Mucosa of descending colon (tissue), 3 donors: ENCODE measurements at regions of chr2 and their contacts with region 1.

Region 1: DNA sequence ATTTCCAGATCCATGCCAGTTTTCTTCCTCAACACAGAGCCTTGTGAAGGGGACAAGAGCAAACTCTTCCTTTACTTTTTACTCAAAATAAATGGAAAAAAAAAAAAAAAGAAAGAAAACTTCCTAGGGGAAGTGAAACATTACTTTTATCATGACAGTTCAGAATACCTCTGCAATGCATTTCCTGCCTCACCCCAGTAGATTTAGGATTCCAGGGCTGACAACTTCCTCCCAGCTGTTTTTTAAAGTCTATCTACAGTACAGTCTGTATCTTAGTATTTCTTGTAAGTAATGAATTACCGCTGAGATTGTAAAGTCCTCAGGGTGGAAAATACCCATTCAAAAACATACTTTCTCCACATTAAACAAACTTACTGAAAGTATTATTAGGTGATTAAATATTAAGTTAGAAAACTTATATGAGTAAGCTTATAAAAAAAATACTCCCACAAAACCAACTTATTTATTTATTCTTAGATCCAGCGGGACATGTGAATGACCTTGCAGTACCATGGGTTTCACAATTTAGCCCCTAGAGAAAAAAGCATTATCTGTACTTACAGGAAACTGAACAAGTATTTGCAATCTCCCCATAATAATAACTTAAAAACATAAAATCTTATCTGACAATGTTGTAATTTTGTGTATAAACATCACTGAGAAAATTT is 117.7 kb downstream of the RBMS1 start:
- DNase-seq: no peak
- ATAC-seq: peak; percentile 52
- H3K4me3 ChIP-seq: no peak overlapping the region
- H3K4me1 ChIP-seq: peaks cover 6% of the 10 kb centered on the region
- CTCF ChIP-seq: no peak

Region 2: DNA sequence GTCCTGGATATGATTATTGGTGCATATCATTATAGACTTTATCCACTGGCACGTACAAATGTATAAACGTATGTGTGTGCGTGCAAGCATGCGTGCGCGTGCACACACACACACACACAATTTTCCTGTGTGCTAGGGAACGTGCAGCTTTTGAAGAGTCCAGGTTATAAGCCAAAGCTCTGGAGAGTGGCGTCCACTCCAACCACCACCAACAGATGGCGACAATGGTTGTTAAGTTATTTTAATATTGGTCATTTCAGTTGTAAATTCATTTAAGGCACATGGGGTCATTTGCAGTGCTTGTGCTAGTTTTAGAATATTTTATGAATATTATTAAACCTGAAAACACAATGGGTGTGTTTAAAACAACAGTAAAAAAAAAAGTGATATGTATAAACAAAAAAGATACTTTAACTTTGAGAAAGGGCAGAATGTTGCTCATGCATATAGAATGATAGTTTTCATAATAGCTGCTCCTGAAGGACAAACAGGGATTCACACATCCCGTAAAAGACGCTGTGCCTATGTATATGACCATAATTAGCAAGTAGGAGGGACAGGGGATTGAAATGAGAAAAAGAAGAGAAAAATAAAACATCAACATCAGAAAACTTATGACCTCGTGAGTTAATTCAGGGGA is 51.7 kb before region 1 on chr2:
- intact Hi-C with region 1: loop called in 1 of 2 experiments (anchors 10 kb)
- DNase-seq: peak in 2 of 3 donors; percentile 65 to 82
- ATAC-seq: peak; percentile 54
- H3K4me3 ChIP-seq: no peak overlapping the region
- H3K4me1 ChIP-seq: peaks cover 5% of the 10 kb centered on the region
- CTCF ChIP-seq: peak; percentile 46